ENCODE measurements at regions of chr20 and their contacts with region 1.

Region 1: DNA sequence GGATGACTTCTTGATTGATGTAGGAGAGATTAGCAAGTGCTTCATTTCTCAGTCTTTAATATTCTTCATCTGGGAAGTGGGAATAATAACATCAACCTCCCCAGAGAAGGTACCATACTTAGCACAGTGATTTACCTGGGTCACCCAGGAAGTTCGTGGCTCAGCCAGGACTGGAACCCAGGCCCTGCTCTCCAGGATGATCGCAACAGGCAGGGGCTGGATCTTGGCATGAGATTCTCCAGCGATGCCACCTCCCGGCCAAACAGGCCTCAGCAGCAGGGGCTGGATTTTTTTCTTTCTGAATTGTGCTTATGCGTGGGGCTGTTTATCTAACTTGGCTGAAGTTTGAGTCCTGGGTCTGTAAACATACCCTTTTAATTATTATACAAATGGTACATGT is 129.5 kb upstream of the PTPN1 start:
- DNase-seq: peak; percentile 28
- ATAC-seq: peak; percentile 71
- H3K4me3 ChIP-seq: no peak overlapping the region
- H3K27ac ChIP-seq: no peak overlapping the region
- H3K4me1 ChIP-seq: peaks cover 21% of the 10 kb centered on the region
- H3K27me3 ChIP-seq: no peaks in the 10 kb centered on the region
- CTCF ChIP-seq: peak; percentile 78

Region 2: GRCh38 chr20:50189681-50190582 is 190.7 kb before region 1 on chr20:
- CTCF ChIA-PET with region 1: interaction called, 4 read pairs
- POLR2A ChIA-PET with region 1: no interaction called
- in situ Hi-C with region 1: no loop called
- intact Hi-C with region 1: loop called (anchors 5 kb)
- DNase-seq: no peak
- ATAC-seq: peak; percentile 72
- H3K4me3 ChIP-seq: peak overlapping the region; percentile 62 to 97
- H3K27ac ChIP-seq: peak overlapping the region; percentile 48; the same call in 1 of the 2 replicates
- H3K4me1 ChIP-seq: peaks cover 37% of the 10 kb centered on the region
- H3K27me3 ChIP-seq: no peaks in the 10 kb centered on the region
- CTCF ChIP-seq: peak; percentile 83